ENCODE measurements at regions of chr20 and their contacts with region 1.

Region 1: DNA sequence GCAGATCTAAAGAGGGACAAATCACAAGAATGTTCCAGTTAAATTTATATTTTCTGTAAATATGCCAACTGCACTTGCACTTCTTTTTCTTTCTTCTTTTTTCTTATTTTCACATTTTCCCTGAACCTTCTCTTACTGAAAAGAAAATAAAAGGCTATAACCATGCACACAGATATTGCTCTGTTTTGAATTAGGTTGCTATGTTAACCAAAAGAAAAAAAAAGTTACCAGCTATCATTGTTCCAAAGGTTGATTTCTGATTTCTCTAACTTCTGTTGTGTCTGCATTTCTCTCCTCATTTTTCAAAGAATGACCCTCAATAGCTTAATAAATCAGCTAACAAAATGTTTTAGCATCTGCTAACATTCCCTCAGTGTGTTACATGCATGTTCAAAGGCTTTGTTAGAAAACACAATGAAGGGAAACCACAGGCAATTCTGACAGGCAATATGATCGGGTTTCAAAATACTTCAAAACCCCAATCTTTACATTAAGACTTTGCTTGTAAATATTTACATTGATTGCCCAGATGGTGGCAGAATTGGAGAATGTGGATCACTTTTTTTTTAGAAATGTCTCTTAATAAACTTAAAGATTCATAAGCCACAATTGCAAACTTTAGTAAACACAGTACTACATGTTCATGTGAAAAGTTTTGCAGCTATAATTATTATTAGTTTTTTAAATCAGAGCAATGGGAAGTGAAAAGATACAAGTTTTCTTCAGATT is 928.3 kb upstream of the FLRT3 start:
- DNase-seq: no peak
- ATAC-seq: no peak
- H3K4me3 Mint-ChIP-seq: no peak overlapping the region
- H3K27ac Mint-ChIP-seq: no peak overlapping the region
- H3K4me1 Mint-ChIP-seq: peaks cover 29% of the 10 kb centered on the region
- H3K27me3 Mint-ChIP-seq: no peaks in the 10 kb centered on the region
- CTCF ChIP-seq: no peak

Region 2: DNA sequence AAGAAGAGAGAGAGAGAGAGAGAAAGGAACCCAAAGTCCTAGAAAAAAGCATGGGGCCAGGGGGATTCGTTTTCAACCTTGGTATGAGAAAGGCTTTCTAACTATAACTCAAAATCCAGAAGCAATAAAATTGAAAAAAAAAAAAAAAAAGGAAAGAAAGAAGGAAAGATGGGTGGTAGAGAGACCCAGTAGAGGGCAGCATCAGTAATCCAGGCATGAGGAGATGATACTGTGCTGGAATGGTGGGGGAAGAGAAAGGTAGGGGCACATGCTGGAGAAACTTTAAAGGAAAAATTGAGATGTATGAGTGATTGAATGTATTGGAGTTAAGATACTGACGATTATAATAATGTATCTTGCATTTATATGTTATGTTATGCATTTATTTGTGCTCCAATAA is 112.4 kb after region 1 on chr20:
- CTCF ChIA-PET with region 1: no interaction called
- POLR2A ChIA-PET with region 1: no interaction called
- intact Hi-C with region 1: loop called (anchors 10 kb)
- DNase-seq: no peak
- ATAC-seq: no peak
- H3K4me3 Mint-ChIP-seq: no peak overlapping the region
- H3K27ac Mint-ChIP-seq: no peak overlapping the region
- H3K4me1 Mint-ChIP-seq: no peaks in the 10 kb centered on the region
- H3K27me3 Mint-ChIP-seq: no peaks in the 10 kb centered on the region
- CTCF ChIP-seq: no peak

Region 3: GRCh38 chr20:16501301-16501700 is 1235.6 kb after region 1 on chr20:
- CTCF ChIA-PET with region 1: no interaction called
- POLR2A ChIA-PET with region 1: no interaction called
- intact Hi-C with region 1: no loop called
- DNase-seq: no peak
- ATAC-seq: no peak
- H3K4me3 Mint-ChIP-seq: no peak overlapping the region
- H3K27ac Mint-ChIP-seq: no peak overlapping the region
- H3K4me1 Mint-ChIP-seq: peaks cover 4% of the 10 kb centered on the region
- H3K27me3 Mint-ChIP-seq: no peaks in the 10 kb centered on the region
- CTCF ChIP-seq: no peak

Measured in activated B cell treated with CpG ODN at 0.5 μM for 24 hours (primary cell).